BJ (cell line): ENCODE measurements at regions of chr1 and their contacts with region 1.

Region 1: GRCh38 chr1:22889213-22889827 is 83.3 kb downstream of the LACTBL1 start:
- DNase-seq: no peak
- H3K4me3 ChIP-seq: no peak overlapping the region
- H3K27me3 ChIP-seq: no peaks in the 10 kb centered on the region
- CTCF ChIP-seq: peak; percentile 83

Region 2: DNA sequence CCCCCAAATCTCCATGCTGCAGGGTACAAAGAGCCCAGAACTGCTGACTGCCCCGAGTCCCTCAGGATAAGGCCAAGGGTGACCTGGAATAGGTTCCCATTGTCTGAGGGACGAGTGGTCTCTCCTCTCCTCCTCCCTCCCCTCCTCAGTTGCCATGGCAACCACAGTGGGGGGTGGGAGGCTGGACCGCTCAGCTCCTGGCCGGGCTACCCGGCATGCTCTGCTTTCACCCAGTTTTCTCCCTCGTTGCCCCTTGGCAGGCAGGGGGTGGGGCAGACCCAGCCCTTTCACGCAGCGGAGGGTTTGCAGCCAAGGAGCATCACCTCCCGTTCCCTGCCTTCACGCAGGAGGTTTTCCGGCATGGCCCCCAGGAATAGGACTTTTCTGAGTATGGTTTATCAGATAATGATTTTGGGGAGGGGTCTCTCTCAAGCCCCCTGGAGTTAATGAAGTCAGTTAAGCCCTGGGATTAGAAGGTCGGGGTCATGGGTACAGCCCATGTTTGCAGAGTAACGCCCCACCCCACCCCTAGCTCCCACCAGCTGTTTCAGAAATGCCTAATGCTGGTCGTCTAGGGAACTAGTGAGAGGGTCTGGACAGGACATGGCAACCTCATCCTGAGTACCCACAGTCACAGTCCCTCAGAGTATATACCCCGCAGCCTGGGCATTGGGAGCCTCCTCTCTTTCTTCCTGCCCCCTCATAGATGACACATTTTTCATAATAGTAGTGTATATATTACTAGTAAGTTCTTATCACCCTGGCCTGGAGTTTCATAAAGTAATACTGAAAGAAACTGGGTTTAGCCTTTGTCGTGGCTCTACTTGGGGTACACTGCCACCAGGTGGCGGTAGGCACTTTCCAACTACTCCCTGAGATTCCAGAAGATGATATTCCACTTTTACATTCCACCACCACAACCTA is 215.6 kb before region 1 on chr1:
- CTCF ChIA-PET with region 1: interaction called, 47 read pairs
- POLR2A ChIA-PET with region 1: no interaction called
- DNase-seq: no peak
- H3K4me3 ChIP-seq: no peak overlapping the region
- H3K27me3 ChIP-seq: peaks cover 28% of the 10 kb centered on the region
- CTCF ChIP-seq: peak; percentile 79

Region 3: DNA sequence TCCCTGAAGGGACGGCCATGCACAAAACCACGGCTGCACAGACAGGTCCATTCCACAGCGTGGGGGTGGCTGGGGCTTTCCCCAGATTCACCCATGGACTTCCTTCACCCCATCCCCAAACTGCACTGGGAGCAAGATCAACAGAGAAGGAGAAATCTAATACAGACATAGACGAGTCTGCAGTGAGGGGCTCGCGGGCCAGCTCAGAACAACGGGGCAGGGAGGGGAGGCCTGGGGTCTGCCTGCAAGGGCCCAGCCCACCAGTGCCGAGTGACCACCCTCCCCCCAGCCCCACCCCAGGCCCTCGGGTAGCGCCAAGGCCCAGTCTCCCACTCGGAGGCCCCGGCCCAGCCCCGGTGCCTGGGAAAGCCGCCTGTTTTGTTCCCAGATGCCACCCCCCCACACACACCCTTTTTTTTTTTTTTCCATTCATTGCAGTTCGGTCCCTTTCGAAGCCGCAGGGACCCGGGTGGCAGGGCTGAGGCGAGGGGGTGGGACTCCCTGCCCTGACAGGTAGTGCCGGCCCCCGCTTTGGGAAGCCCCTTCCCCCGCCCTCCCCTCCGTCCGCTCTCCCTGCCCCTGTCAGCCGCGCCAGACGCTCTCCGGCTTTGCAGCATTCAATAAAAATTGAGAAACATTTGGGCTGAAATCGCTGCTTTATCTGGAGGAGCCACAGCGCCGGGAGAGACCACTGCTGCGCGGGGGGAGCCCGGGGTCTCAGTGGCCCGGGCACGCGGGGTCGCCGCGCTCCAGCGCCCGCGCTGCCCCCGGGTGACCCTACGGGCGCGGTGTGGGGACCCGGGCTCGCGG is 179.2 kb before region 1 on chr1:
- CTCF ChIA-PET with region 1: interaction called, 79 read pairs
- POLR2A ChIA-PET with region 1: no interaction called
- DNase-seq: no peak
- H3K4me3 ChIP-seq: peak overlapping the region; percentile 49
- H3K27me3 ChIP-seq: 0 out of 2 replicates have a peak, but pooled peaks cover 2% of the 10 kb centered on the region
- CTCF ChIP-seq: no peak

Region 4: DNA sequence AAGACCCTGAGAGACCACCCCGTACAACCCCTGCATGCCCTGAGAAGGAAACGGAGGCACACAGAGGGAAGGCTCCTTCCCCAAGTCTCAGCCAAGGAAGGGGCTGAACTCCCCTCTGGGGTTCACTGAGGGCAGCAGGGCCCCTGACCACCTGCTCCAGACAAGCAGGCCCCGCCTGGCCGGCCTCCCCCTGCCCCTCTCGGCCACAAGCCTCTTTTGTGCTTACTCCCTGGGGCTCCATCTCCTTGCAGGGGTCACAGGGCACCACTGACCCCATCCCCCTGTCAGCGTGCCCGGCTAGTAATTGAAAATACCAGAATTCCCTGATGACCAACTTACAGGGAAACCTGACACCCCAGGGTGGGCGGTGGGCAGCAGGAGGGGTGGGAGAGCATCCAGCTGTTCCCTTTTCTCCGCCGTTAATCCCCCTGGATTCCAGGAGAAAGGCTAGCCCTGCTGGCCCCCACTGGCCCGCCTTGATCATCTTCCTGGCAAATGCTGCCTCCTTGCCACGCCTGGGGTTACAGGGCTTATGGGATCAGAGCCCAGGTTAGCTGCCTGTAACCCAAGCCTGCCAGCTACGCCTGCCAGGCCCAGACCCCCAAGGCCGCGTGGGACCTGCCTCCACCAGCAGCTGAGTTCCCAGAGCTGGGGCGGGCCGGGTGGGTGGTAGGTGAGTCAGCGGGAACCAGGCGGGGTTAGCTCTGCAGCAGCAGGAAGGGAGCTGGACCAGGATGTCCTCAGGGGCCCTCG is 12.8 kb before region 1 on chr1:
- CTCF ChIA-PET with region 1: interaction called, 19 read pairs
- POLR2A ChIA-PET with region 1: no interaction called
- DNase-seq: no peak
- H3K4me3 ChIP-seq: no peak overlapping the region
- H3K27me3 ChIP-seq: no peaks in the 10 kb centered on the region
- CTCF ChIP-seq: no peak

Region 5: DNA sequence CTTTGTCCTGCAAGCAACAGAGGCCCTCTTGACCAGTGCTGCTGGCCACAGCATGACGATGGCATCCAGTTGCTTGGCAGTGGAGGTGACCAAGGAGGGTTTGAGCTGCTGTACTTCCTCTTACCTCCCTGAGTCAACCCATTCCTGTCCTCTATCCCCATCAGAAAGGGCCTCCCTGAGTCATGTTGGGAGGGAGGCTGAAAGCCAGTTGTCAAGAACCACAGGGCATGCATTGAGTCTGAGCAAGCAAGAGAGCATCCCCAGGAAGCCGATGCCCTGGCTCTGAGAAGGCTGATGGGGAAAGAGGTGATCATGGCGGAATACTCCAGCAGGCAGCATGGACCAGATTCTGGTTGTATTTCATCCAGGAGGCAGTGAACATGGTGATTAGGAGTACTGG is 13.8 kb after region 1 on chr1:
- CTCF ChIA-PET with region 1: interaction called, 20 read pairs
- POLR2A ChIA-PET with region 1: no interaction called
- DNase-seq: no peak
- H3K4me3 ChIP-seq: no peak overlapping the region
- H3K27me3 ChIP-seq: no peaks in the 10 kb centered on the region
- CTCF ChIP-seq: no peak